ENCODE measurements at regions of chr20 and their contacts with region 1.

Region 1: GRCh38 chr20:31951530-31952453 is at the start of gene PDRG1:
- DNase-seq: peak; percentile 97
- H3K4me3 ChIP-seq: peak within 1 kb of the TSS; percentile 92 to 99 (median 94)
- H3K27ac ChIP-seq: peak within 1 kb of the TSS; percentile 82 to 84 (median 82)
- H3K4me1 ChIP-seq: peaks cover 13 to 24% (median 22%) of the 10 kb centered on the region in 4 donors
- H3K27me3 ChIP-seq: peaks cover 0 to 11% (median 3%) of the 10 kb centered on the region in 4 donors
- CTCF ChIP-seq: peak; percentile 91 to 99 (median 96)
- EP300 ChIP-seq: no peak
- POLR2A ChIP-seq: no peak
- total RNA-seq, gene PDRG1: 7.9 to 15.9 (median 10.8) TPM

Region 2: GRCh38 chr20:31822421-31823330 is 129.1 kb before region 1 on chr20:
- intact Hi-C with region 1: loop called (anchors 1 kb)
- DNase-seq: no peak
- H3K4me3 ChIP-seq: peak overlapping the region in 3 of 4 donors; percentile 2 to 17 (median 15)
- H3K27ac ChIP-seq: no peak overlapping the region
- H3K4me1 ChIP-seq: peaks cover 4 to 15% (median 12%) of the 10 kb centered on the region in 4 donors
- H3K27me3 ChIP-seq: no peaks in the 10 kb centered on the region
- CTCF ChIP-seq: peak; percentile 97 to 100 (median 99)
- EP300 ChIP-seq: no peak
- POLR2A ChIP-seq: no peak

Region 3: GRCh38 chr20:31894980-31895675 is 56.7 kb before region 1 on chr20:
- intact Hi-C with region 1: loop called (anchors 5 kb)
- DNase-seq: no peak
- H3K4me3 ChIP-seq: no peak overlapping the region
- H3K27ac ChIP-seq: peak overlapping the region; percentile 52 to 66 (median 62)
- H3K4me1 ChIP-seq: peaks cover 4 to 6% (median 5%) of the 10 kb centered on the region in 4 donors
- H3K27me3 ChIP-seq: no peaks in the 10 kb centered on the region
- CTCF ChIP-seq: no peak
- EP300 ChIP-seq: no peak
- POLR2A ChIP-seq: no peak

Measured in esophagus muscularis mucosa (tissue), 4 donors.